Ovary (tissue), 10 donors: ENCODE measurements at regions of chr1 and their contacts with region 1.

Region 1: GRCh38 chr1:26999440-26999987 is 6.0 kb downstream of the TRNP1 start:
- DNase-seq: peak; percentile 41 to 80 (median 76)
- H3K4me3 ChIP-seq: no peak overlapping the region
- H3K27ac ChIP-seq: no peak overlapping the region
- H3K4me1 ChIP-seq: peaks cover 14% of the 10 kb centered on the region
- H3K27me3 ChIP-seq: no peaks in the 10 kb centered on the region
- CTCF ChIP-seq: no peak
- EP300 ChIP-seq: peak; percentile 55
- POLR2A ChIP-seq: no peak

Region 2: GRCh38 chr1:27097484-27097917 is 98.0 kb after region 1 on chr1:
- intact Hi-C with region 1: loop called in 3 of 4 experiments (anchors 5 kb)
- DNase-seq: peak; percentile 72 to 87 (median 83)
- H3K4me3 ChIP-seq: no peak overlapping the region
- H3K27ac ChIP-seq: no peak overlapping the region
- H3K4me1 ChIP-seq: peaks cover 4% of the 10 kb centered on the region
- H3K27me3 ChIP-seq: no peaks in the 10 kb centered on the region
- CTCF ChIP-seq: peak; percentile 76 to 95 (median 95)
- EP300 ChIP-seq: no peak
- POLR2A ChIP-seq: no peak